Ovary (tissue), 10 donors: ENCODE measurements at regions of chr3 and their contacts with region 1.

Region 1: DNA sequence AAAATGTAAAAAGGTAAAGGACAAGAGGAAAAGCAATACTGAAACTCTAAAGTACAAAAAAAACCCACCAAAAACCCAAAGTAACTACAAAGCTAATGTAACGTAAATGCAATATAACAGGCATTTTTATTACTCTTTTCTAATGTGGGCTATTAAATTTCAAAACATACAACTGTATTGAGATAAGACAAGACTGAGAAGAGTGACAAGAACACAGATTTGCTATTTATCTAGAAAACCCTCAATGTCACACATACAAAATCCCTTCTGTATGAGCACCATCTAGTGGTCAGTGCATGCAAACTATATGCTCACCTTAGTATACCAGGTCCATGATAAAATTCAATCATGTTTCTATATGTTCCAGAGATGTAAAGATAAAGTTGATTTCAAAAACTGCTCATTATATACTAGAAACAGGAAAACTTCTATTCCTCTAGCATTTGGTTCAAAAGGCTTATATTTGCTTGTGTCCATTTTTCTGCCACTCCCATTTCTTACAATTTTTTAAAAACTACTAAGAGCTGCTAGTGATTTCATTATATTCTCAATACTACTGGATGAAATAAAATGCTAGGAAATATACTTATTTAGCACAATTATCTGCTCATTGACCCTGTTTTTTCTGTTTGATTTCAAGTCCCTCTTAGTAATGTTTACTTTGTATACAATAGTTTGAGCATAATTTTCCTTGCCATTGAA is 111.4 kb downstream of the DLG1 start:
- DNase-seq: no peak
- H3K4me3 ChIP-seq: no peak overlapping the region
- H3K27ac ChIP-seq: no peak overlapping the region
- H3K4me1 ChIP-seq: no peaks in the 10 kb centered on the region
- H3K27me3 ChIP-seq: no peaks in the 10 kb centered on the region
- CTCF ChIP-seq: peak in 2 of 3 donors; percentile 59 to 72
- EP300 ChIP-seq: no peak
- POLR2A ChIP-seq: no peak

Region 2: GRCh38 chr3:195815169-195815771 is 1371.8 kb before region 1 on chr3:
- intact Hi-C with region 1: no loop called
- DNase-seq: no peak
- H3K4me3 ChIP-seq: no peak overlapping the region
- H3K27ac ChIP-seq: no peak overlapping the region
- H3K4me1 ChIP-seq: no peaks in the 10 kb centered on the region
- H3K27me3 ChIP-seq: no peaks in the 10 kb centered on the region
- CTCF ChIP-seq: no peak
- EP300 ChIP-seq: no peak
- POLR2A ChIP-seq: no peak

Region 3: DNA sequence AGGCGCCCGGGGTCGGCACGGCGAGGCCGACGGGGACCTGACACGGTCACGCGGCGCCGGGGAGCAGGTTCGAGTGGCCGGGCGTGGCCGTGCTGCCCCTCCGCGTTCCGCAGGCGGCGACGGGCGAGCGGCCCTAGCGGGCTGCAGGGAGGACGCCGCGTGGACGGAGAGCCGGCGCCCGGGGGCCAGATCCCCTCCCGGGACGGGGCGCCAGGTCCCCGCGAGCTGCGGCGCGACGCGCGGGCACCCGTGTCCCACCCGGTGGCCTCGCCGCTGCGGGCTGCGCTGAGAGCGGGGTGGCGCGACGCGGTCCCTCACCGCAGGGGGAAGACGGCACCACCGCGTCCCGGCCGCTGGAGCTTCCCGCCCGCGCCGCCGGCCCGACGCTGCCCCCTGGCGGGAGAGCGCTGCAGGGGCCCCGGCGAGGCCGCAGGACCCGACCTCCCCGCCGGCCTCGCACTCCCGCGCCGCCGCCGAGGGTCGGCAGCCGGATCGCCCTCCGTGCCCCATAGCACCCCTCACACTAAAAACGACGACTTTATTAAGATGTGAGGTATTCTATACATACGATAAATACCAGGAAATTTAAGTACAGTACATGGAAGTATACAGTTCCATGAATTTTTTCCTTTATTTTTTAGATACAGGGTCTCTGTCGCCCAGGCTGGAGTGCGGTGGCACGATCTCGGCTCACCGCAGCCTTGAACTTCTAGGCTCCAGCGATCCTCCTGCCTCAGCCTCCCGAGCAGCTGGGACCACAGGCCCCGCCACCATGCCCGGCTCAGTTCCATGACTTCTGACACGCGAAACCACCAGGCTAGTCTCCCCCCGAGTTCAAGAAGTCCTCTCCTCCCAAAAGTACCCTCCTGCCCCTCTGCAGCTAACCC is 217.1 kb before region 1 on chr3:
- intact Hi-C with region 1: loop called in 2 of 4 experiments (anchors 10 kb)
- DNase-seq: peak in 4 of 5 donors; percentile 44 to 74 (median 60)
- H3K4me3 ChIP-seq: peak overlapping the region; percentile 65
- H3K27ac ChIP-seq: no peak overlapping the region
- H3K4me1 ChIP-seq: peaks cover 5% of the 10 kb centered on the region
- H3K27me3 ChIP-seq: peaks cover 4% of the 10 kb centered on the region
- CTCF ChIP-seq: peak; percentile 25 to 89 (median 80)
- EP300 ChIP-seq: no peak
- POLR2A ChIP-seq: no peak

Region 4: GRCh38 chr3:196995646-196996371 is 191.2 kb before region 1 on chr3:
- intact Hi-C with region 1: loop called in 2 of 4 experiments (anchors 10 kb)
- DNase-seq: peak in 1 of 5 donors; percentile 17
- H3K4me3 ChIP-seq: no peak overlapping the region
- H3K27ac ChIP-seq: no peak overlapping the region
- H3K4me1 ChIP-seq: no peaks in the 10 kb centered on the region
- H3K27me3 ChIP-seq: no peaks in the 10 kb centered on the region
- CTCF ChIP-seq: no peak
- EP300 ChIP-seq: no peak
- POLR2A ChIP-seq: no peak

Region 5: GRCh38 chr3:197002701-197003454 is 184.2 kb before region 1 on chr3:
- intact Hi-C with region 1: loop called in 2 of 4 experiments (anchors 10 kb)
- DNase-seq: peak; percentile 76 to 88 (median 80)
- H3K4me3 ChIP-seq: peak overlapping the region; percentile 56
- H3K27ac ChIP-seq: peak overlapping the region; percentile 98 to 99
- H3K4me1 ChIP-seq: peaks cover 4% of the 10 kb centered on the region
- H3K27me3 ChIP-seq: no peaks in the 10 kb centered on the region
- CTCF ChIP-seq: peak; percentile 37 to 91 (median 88)
- EP300 ChIP-seq: no peak
- POLR2A ChIP-seq: peak; percentile 11